CD14-positive monocyte (primary cell): ENCODE measurements at regions of chr6 and their contacts with region 1.

Region 1: DNA sequence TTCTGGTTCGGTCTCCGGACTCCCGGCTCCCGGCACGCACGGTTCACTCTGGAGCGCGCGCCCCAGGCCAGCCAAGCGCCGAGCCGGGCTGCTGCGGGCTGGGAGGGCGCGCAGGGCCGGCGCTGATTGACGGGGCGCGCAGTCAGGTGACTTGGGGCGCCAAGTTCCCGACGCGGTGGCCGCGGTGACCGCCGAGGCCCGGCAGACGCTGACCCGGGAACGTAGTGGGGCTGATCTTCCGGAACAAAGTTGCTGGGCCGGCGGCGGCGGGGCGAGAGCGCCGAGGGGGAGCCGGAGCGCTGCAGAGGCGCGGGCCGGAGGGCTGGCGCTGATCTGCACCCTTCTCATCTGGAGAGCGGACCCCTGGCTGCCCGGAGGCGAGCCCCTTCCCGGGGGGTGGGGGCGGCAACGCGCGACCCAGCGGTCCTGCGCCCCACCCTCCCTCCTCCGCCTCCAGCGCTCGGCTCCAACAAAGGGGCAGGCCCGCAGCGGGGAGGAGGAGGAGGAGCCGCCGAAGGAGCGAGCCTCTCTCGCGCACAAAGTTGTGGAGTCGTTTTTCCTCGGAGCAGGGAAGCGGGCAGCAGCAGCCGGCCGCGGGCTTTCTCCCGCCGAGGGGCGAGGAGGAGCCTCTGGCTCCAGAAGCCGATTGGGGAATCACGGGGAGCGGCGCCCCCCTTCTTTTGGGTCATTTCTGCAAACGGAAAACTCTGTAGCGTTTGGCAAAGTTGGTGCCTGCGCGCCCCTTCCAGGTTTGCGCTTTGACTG is at the start of gene UTRN:
- DNase-seq: peak; percentile 64 to 77 (median 66)
- H3K4me3 ChIP-seq: peak within 1 kb of the TSS; percentile 65 to 96 (median 87)
- H3K4me3 Mint-ChIP-seq: peak within 1 kb of the TSS; percentile 95 to 97
- H3K27ac ChIP-seq: peak within 1 kb of the TSS; percentile 87 to 92
- H3K27ac Mint-ChIP-seq: peak within 1 kb of the TSS; percentile 86 to 96 (median 93)
- H3K4me1 ChIP-seq: peaks cover 12 to 20% of the 10 kb centered on the region in 2 donors
- H3K4me1 Mint-ChIP-seq: peaks cover 24% of the 10 kb centered on the region
- H3K27me3 ChIP-seq: no peaks in the 10 kb centered on the region
- H3K27me3 Mint-ChIP-seq: peaks cover 0 to 2% (median 0%) of the 10 kb centered on the region in 3 donors
- CTCF ChIP-seq: no peak
- polyA plus RNA-seq, gene UTRN: 21.8 to 106 (median 66.1) TPM

Region 2: GRCh38 chr6:143940011-143940597 is 344.9 kb before region 1 on chr6:
- intact Hi-C with region 1: no loop called
- DNase-seq: peak; percentile 36 to 52 (median 42)
- H3K4me3 ChIP-seq: no peak overlapping the region
- H3K4me3 Mint-ChIP-seq: no peak overlapping the region
- H3K27ac ChIP-seq: no peak overlapping the region
- H3K27ac Mint-ChIP-seq: peak overlapping the region in 1 of 7 donors; percentile 76
- H3K4me1 ChIP-seq: peaks cover 29 to 30% of the 10 kb centered on the region in 2 donors
- H3K4me1 Mint-ChIP-seq: peaks cover 36% of the 10 kb centered on the region
- H3K27me3 ChIP-seq: no peaks in the 10 kb centered on the region
- H3K27me3 Mint-ChIP-seq: peaks cover 0 to 5% (median 2%) of the 10 kb centered on the region in 3 donors
- CTCF ChIP-seq: peak; percentile 87

Region 3: GRCh38 chr6:144095331-144096002 is 189.5 kb before region 1 on chr6 and contains the start of gene SF3B5:
- intact Hi-C with region 1: loop called in 1 of 2 experiments (anchors 10 kb)
- DNase-seq: peak; percentile 100
- H3K4me3 ChIP-seq: peak within 1 kb of the TSS; percentile 73 to 84 (median 82)
- H3K4me3 Mint-ChIP-seq: peak within 1 kb of the TSS; percentile 95 to 97
- H3K27ac ChIP-seq: peak within 1 kb of the TSS; percentile 87 to 94
- H3K27ac Mint-ChIP-seq: peak within 1 kb of the TSS; percentile 96 to 99 (median 97)
- H3K4me1 ChIP-seq: peaks cover 17 to 24% of the 10 kb centered on the region in 2 donors
- H3K4me1 Mint-ChIP-seq: peaks cover 21% of the 10 kb centered on the region
- H3K27me3 ChIP-seq: no peaks in the 10 kb centered on the region
- H3K27me3 Mint-ChIP-seq: peaks cover 0 to 2% (median 2%) of the 10 kb centered on the region in 3 donors
- CTCF ChIP-seq: no peak
- polyA plus RNA-seq, gene SF3B5: 271 to 445 (median 355) TPM

Region 4: GRCh38 chr6:144181639-144182038 is 103.3 kb before region 1 on chr6:
- intact Hi-C with region 1: no loop called
- DNase-seq: peak; percentile 64 to 88 (median 81)
- H3K4me3 ChIP-seq: peak overlapping the region in 1 of 3 experiments; percentile 49
- H3K4me3 Mint-ChIP-seq: no peak overlapping the region
- H3K27ac ChIP-seq: peak overlapping the region; percentile 32 to 53
- H3K27ac Mint-ChIP-seq: peak overlapping the region in 6 of 7 donors; percentile 86 to 95 (median 90)
- H3K4me1 ChIP-seq: peaks cover 66 to 90% of the 10 kb centered on the region in 2 donors
- H3K4me1 Mint-ChIP-seq: peaks cover 87% of the 10 kb centered on the region
- H3K27me3 ChIP-seq: no peaks in the 10 kb centered on the region
- H3K27me3 Mint-ChIP-seq: no peaks in the 10 kb centered on the region
- CTCF ChIP-seq: no peak

Region 5: GRCh38 chr6:144362042-144363018 is 77.4 kb after region 1 on chr6:
- intact Hi-C with region 1: loop called (anchors 5 to 10 kb)
- DNase-seq: peak in 1 of 3 donors; percentile 26
- H3K4me3 ChIP-seq: no peak overlapping the region
- H3K4me3 Mint-ChIP-seq: no peak overlapping the region
- H3K27ac ChIP-seq: peak overlapping the region; percentile 7 to 50
- H3K27ac Mint-ChIP-seq: peak overlapping the region; percentile 57 to 85 (median 70)
- H3K4me1 ChIP-seq: peaks cover 34 to 39% of the 10 kb centered on the region in 2 donors
- H3K4me1 Mint-ChIP-seq: peaks cover 65% of the 10 kb centered on the region
- H3K27me3 ChIP-seq: no peaks in the 10 kb centered on the region
- H3K27me3 Mint-ChIP-seq: no peaks in the 10 kb centered on the region
- CTCF ChIP-seq: no peak

Region 6: DNA sequence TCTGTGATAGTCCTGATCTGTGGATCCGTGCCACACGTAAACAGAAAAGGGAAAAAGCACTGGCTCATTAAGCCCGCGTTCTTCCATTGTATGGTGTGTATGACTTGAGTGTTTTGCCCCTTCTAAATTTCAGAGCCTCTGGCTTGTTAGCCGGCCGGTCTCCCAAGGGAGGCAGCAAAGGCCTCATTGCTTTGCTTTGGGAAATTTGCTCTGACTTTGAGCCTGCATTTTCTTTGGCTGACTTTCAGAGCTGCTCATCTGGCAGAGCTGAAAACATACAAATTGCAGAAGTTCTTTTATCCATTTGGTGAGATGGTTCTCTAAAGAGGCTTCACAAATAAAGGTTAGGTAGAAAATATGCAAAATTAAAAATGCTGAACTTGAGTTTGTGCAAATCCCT is 123.2 kb after region 1 on chr6:
- intact Hi-C with region 1: loop called in 1 of 2 experiments (anchors 10 kb)
- DNase-seq: no peak
- H3K4me3 ChIP-seq: no peak overlapping the region
- H3K4me3 Mint-ChIP-seq: no peak overlapping the region
- H3K27ac ChIP-seq: no peak overlapping the region
- H3K27ac Mint-ChIP-seq: no peak overlapping the region
- H3K4me1 ChIP-seq: no peaks in the 10 kb centered on the region
- H3K4me1 Mint-ChIP-seq: peaks cover 7% of the 10 kb centered on the region
- H3K27me3 ChIP-seq: no peaks in the 10 kb centered on the region
- H3K27me3 Mint-ChIP-seq: no peaks in the 10 kb centered on the region
- CTCF ChIP-seq: no peak